Calu3 (cell line): ENCODE measurements at regions of chr5 and their contacts with region 1.

Region 1: DNA sequence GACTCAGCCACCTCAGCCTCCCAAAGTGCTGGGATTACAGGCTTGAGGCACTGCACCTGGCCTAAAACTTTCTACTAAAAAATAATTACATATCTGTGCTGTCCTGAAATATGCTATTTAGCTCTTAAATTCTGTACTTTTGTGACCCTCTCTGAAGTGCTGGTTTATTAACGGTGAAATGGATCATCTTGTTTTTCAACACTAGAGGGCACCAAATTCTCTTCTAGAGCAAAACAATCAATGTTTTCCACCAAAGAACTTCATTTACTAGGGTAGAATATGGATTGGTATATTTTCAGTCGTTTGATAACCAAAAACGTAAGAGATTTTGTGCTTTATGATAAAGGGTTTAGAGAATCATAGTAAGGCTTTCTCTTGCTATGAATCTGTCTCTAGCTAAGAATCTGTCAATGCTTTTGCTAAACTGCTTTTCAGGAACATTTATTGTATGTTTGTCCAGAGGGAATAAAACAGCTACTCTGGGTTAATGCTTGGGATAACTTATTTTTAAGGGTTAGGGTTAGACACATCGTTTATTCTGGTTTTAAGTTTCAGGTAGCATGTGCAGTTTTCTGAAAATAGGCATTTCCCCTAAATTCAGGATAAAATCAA is 63.6 kb downstream of the RNF180 start:
- DNase-seq: no peak
- H3K4me3 Mint-ChIP-seq: no peak overlapping the region
- H3K27ac Mint-ChIP-seq: no peak overlapping the region
- H3K4me1 Mint-ChIP-seq: peaks cover 8% of the 10 kb centered on the region
- H3K27me3 Mint-ChIP-seq: no peaks in the 10 kb centered on the region
- CTCF ChIP-seq: peak; percentile 32

Region 2: GRCh38 chr5:64384761-64385160 is 155.5 kb after region 1 on chr5:
- CTCF ChIA-PET with region 1: no interaction called
- intact Hi-C with region 1: loop called (anchors 10 kb)
- DNase-seq: peak; percentile 57
- H3K4me3 Mint-ChIP-seq: no peak overlapping the region
- H3K27ac Mint-ChIP-seq: no peak overlapping the region
- H3K4me1 Mint-ChIP-seq: no peaks in the 10 kb centered on the region
- H3K27me3 Mint-ChIP-seq: no peaks in the 10 kb centered on the region
- CTCF ChIP-seq: peak; percentile 48

Region 3: DNA sequence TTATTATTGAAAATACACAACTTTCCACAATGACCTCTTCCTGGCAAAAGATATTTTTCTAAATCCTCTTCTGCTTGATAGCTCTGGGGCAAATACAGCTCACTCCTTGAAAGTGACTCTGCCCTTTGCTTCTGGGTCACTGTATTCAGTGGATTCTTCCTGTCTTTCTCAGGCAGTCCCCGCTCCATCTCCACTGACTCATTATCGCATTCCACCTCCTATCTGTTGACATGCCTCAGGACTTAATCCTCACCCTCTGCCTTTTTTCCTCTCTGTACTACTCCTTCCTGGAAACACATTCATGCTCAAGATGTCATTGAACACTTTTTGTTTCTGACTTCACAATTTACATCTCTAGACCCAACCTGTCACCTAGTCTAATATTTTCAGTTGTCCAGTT is 268.1 kb after region 1 on chr5:
- CTCF ChIA-PET with region 1: no interaction called
- intact Hi-C with region 1: loop called (anchors 10 kb)
- DNase-seq: no peak
- H3K4me3 Mint-ChIP-seq: no peak overlapping the region
- H3K27ac Mint-ChIP-seq: no peak overlapping the region
- H3K4me1 Mint-ChIP-seq: peaks cover 9% of the 10 kb centered on the region
- H3K27me3 Mint-ChIP-seq: no peaks in the 10 kb centered on the region
- CTCF ChIP-seq: no peak